T-cell (primary cell): ENCODE measurements at regions of chr12 and their contacts with region 1.

Region 1: DNA sequence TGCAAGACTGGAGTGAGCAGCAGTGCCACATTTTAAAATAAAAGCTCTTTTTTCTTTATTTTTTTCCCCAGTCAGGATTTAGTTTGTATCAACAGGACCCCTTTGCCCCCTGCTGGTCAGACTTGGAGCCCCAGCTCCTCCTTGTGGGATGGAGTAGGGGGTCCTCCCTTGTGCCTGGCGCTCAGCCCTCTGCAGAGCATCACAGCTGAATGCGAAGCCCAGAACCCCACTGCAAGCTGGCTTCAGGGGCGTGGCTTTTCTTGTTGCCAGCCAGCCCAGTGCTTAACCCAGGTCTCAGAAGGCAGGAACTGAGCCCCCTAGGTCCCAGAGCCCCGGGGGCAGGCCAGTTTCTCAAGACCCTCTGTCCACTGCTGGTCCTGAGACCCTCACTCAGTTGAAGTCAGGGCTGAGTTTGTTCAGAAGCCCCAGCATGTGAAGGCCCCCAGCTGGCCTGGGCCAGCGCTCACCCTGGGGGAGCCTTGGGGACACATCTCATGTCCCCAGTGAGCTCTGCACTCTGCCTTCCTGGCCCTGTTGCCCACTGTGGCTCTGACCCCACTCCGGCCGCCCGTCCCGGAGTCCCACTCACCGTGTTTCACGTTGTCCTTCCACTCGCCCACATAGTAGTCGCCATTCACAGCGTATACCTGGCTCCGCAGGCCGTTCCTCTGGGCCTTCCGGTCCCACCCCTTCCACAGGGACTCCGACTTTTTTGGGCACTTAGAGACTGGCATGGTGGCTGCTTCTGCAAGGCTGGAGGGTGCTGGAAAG is 519 bp downstream of the MORN3 start:
- DNase-seq: peak in 32 of 35 experiments; percentile 20 to 75 (median 57)
- ATAC-seq: no peak
- H3K4me3 ChIP-seq: no peak overlapping the region
- H3K4me3 Mint-ChIP-seq: no peak overlapping the region
- H3K27ac ChIP-seq: no peak overlapping the region
- H3K27ac Mint-ChIP-seq: peak overlapping the region; percentile 80 to 82
- H3K4me1 ChIP-seq: peaks cover 29 to 84% of the 10 kb centered on the region in 2 experiments
- H3K4me1 Mint-ChIP-seq: peaks cover 58 to 70% (median 61%) of the 10 kb centered on the region in 3 donors
- H3K27me3 ChIP-seq: no peaks in the 10 kb centered on the region
- H3K27me3 Mint-ChIP-seq: no peaks in the 10 kb centered on the region

Region 2: DNA sequence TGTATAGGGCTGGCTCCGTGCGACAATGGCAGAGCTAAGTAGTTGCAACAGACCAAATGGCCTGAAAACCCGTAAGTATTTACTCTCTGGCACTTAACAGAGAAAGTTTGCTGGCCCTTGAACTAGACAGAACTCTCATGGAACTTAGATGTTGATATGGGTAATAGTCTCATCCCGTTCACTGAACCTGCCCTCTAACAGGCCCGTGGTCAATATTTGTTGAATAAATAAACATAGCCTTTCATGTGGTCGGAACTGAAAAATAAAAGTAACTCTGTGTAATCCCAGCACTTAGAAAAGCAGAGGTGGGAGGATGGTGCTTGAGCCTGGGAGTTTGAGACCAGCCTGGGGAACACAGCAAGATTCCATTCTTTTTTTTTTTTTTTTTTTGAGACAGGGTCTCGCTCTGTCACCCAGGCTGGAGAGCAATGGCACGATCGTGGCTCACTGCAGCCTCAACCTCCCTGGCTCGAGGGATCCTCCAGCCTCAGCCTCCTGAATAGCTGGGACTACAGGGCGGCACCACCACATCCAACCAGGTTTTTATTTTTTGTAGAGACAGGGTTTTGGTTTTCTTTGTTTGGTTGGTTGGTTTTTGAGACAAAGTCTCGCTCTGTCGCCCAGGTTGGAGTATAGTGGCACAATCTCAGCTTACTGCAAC is 117.8 kb before region 1 on chr12:
- CTCF ChIA-PET with region 1: interaction called, 26 to 27 read pairs
- POLR2A ChIA-PET with region 1: interaction called in 1 of 2 experiments, 8 read pairs
- DNase-seq: no peak
- ATAC-seq: no peak
- H3K4me3 ChIP-seq: no peak overlapping the region
- H3K4me3 Mint-ChIP-seq: no peak overlapping the region
- H3K27ac ChIP-seq: peak overlapping the region; percentile 31
- H3K27ac Mint-ChIP-seq: no peak overlapping the region
- H3K4me1 ChIP-seq: peaks cover 0 to 20% of the 10 kb centered on the region in 2 experiments
- H3K4me1 Mint-ChIP-seq: peaks cover 0 to 11% (median 8%) of the 10 kb centered on the region in 3 donors
- H3K27me3 ChIP-seq: no peaks in the 10 kb centered on the region
- H3K27me3 Mint-ChIP-seq: no peaks in the 10 kb centered on the region

Region 3: GRCh38 chr12:121626087-121626852 is 42.7 kb before region 1 on chr12 and contains the start of gene ORAI1:
- CTCF ChIA-PET with region 1: interaction called, 7 to 20 read pairs
- POLR2A ChIA-PET with region 1: interaction called, 9 to 58 read pairs
- DNase-seq: peak; percentile 84 to 98 (median 93)
- ATAC-seq: peak; percentile 77 to 87 (median 80)
- H3K4me3 ChIP-seq: peak within 1 kb of the TSS; percentile 85 to 96
- H3K4me3 Mint-ChIP-seq: peak within 1 kb of the TSS; percentile 93 to 95 (median 93)
- H3K27ac ChIP-seq: peak within 1 kb of the TSS; percentile 89
- H3K27ac Mint-ChIP-seq: peak within 1 kb of the TSS; percentile 96 to 97
- H3K4me1 ChIP-seq: peaks cover 25 to 52% of the 10 kb centered on the region in 2 experiments
- H3K4me1 Mint-ChIP-seq: peaks cover 44 to 51% (median 45%) of the 10 kb centered on the region in 3 donors
- H3K27me3 ChIP-seq: no peaks in the 10 kb centered on the region
- H3K27me3 Mint-ChIP-seq: no peaks in the 10 kb centered on the region
- total RNA-seq, gene ORAI1: 38.9 to 76.5 (median 59.0) TPM

Region 4: DNA sequence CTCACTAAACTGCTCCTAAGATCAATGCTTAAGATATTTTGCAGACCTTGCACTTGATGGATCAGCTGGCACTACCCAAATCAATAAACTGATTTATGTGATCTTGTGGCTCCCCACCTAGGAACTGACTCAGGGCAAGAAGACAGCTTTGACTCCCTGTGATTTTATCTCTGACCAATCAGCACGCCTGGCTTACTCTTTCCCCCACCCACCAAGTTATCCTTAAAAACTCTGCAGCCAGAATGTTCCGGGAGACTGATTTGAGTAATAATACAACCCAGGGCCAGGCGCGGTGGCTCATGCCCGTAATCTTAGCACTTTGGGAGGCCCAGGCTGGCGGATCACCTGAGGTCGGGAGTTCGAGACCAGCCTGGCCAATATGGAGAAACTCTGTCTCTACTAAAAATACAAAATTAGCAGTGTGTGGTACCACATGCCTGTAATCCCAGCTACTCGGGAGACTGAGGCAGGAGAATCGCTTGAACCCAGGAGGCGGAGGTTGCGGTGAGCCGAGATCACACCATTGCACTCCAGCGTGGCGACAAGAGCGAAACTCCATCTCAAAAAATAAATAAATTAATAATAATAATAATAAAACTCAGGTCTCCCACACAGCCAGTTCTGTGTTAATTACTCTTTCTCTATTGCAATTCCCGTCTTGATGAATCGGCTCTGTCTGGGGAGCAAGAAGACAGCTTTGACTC is 11.5 kb before region 1 on chr12:
- CTCF ChIA-PET with region 1: interaction called in 1 of 2 experiments, 6 read pairs
- POLR2A ChIA-PET with region 1: interaction called in 1 of 2 experiments, 17 read pairs
- DNase-seq: no peak
- ATAC-seq: no peak
- H3K4me3 ChIP-seq: no peak overlapping the region
- H3K4me3 Mint-ChIP-seq: peak overlapping the region in 1 of 3 donors; percentile 86
- H3K27ac ChIP-seq: no peak overlapping the region
- H3K27ac Mint-ChIP-seq: peak overlapping the region; percentile 98 to 99
- H3K4me1 ChIP-seq: peaks cover 26 to 64% of the 10 kb centered on the region in 2 experiments
- H3K4me1 Mint-ChIP-seq: peaks cover 52 to 76% (median 65%) of the 10 kb centered on the region in 3 donors
- H3K27me3 ChIP-seq: no peaks in the 10 kb centered on the region
- H3K27me3 Mint-ChIP-seq: no peaks in the 10 kb centered on the region

Region 5: DNA sequence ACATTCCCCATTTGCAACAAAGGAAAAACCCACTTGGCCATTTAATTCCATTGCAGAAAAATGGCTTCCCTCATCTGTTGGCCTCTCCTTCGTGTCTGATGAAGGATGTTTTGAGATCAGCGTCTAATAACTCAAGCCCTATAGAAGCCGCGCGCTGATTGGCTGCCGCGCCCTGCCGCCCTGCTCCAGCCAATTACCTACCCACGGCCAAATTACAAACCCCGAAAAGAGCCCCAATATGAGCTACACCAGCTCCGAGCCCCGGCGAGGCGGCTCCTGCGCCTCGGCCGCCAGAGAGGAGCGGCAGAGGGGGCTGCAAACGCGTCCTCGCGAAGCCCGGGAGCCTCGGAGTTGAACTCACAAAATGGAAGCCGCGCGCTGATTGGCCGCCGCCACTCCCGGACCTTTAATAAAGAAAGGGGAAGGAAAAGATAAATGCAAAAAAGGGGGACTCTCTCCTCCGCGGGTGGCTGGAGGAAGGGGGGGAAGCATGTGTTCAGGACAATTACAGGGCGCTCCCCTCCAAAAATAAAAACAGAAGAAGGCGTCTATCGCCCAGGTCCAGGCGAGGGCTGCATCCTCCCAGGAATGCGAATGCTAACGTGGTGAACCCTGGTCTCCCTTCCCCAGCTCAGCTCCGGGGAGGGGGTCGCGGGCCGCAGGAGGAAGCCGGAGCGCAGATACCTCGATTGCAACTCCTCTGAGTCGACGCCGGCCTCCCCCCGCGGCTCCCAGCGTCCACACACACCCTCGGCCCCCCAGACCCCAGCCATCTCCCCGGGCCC is 134.1 kb after region 1 on chr12:
- CTCF ChIA-PET with region 1: interaction called in 1 of 2 experiments, 6 read pairs
- POLR2A ChIA-PET with region 1: interaction called, 4 to 10 read pairs
- DNase-seq: peak; percentile 81 to 94 (median 87)
- ATAC-seq: peak; percentile 45 to 57 (median 52)
- H3K4me3 ChIP-seq: peak overlapping the region; percentile 92 to 97
- H3K4me3 Mint-ChIP-seq: peak overlapping the region; percentile 93 to 98 (median 96)
- H3K27ac ChIP-seq: peak overlapping the region; percentile 96
- H3K27ac Mint-ChIP-seq: peak overlapping the region; percentile 96 to 98
- H3K4me1 ChIP-seq: peaks cover 27 to 52% of the 10 kb centered on the region in 2 experiments
- H3K4me1 Mint-ChIP-seq: peaks cover 25 to 47% (median 40%) of the 10 kb centered on the region in 3 donors
- H3K27me3 ChIP-seq: no peaks in the 10 kb centered on the region
- H3K27me3 Mint-ChIP-seq: no peaks in the 10 kb centered on the region